ENCODE measurements at regions of chr4 and their contacts with region 1.

Region 1: DNA sequence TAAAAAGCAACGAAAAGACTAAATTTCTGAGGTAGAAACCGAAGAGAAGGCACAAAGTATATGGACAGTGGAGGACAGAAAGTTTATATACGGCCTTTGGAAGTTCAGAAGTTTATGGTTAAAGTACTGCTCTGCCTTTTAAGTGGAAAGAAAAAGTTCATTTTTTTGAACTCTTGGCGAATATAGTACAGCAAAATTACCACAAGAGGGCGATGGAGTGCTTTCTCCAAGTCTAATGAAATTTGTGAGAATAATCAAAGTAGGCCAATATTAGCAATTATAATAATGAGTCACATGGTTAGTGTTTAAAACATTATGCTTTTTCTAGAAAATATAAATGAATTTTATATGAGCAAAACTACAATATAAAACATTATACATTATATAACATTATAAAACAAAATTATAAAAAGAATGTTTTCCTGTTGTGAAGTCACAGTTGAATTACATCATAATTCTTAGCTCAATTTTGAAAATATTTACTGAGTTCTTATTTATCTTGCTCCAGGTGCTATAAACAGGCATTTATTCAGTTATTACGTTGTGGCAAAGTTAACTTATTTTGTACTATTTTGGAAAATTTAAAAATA is 136.2 kb upstream of the BMPR1B start:
- DNase-seq: no peak
- H3K4me3 ChIP-seq: no peak overlapping the region
- H3K27ac ChIP-seq: no peak overlapping the region
- H3K27me3 ChIP-seq: no peaks in the 10 kb centered on the region
- CTCF ChIP-seq: peak; percentile 76 to 97 (median 87)

Region 2: GRCh38 chr4:94732358-94732698 is 110.7 kb after region 1 on chr4:
- intact Hi-C with region 1: loop called in 1 of 2 experiments (anchors 10 kb)
- DNase-seq: no peak
- H3K4me3 ChIP-seq: no peak overlapping the region
- H3K27ac ChIP-seq: no peak overlapping the region
- H3K27me3 ChIP-seq: peaks cover 0 to 5% (median 0%) of the 10 kb centered on the region in 45 donors
- CTCF ChIP-seq: no peak

Region 3: DNA sequence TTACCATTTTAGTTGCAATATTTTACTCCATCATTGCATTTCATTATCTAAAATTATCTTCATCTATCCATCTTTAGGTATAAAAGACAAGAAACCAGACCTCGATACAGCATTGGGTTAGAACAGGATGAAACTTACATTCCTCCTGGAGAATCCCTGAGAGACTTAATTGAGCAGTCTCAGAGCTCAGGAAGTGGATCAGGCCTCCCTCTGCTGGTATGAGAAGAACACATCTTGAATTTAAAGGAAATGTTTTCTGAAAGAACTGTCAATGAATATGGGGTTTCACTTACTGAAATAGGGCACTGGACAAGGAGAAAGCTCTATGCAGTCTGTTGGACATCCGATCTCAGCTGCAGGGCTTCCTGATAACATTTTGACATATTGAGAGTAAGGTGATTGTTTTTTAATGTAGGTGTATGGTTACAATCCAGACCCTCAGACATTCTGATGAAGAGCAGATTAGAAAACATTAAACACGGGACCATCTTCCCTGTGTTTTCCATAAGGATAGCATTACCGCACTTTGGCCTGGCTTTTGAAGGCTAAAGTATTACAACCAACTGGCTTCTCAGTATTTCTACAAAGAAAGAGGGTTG is 503.4 kb after region 1 on chr4:
- intact Hi-C with region 1: loop called in 1 of 2 experiments (anchors 5 kb)
- DNase-seq: peak in 1 of 10 donors; percentile 42
- H3K4me3 ChIP-seq: no peak overlapping the region
- H3K27ac ChIP-seq: no peak overlapping the region
- H3K27me3 ChIP-seq: peaks cover 0 to 4% (median 0%) of the 10 kb centered on the region in 45 donors
- CTCF ChIP-seq: peak; percentile 20 to 76 (median 51)